PC-9 (cell line): ENCODE measurements at regions of chr1 and their contacts with region 1.

Region 1: GRCh38 chr1:44377925-44378784 is 23.1 kb upstream of the ERI3 start:
- DNase-seq: peak in 1 of 2 experiments; percentile 61
- H3K4me3 ChIP-seq: no peak overlapping the region
- H3K27ac ChIP-seq: no peak overlapping the region
- H3K4me1 ChIP-seq: no peaks in the 10 kb centered on the region
- H3K27me3 ChIP-seq: no peaks in the 10 kb centered on the region
- CTCF ChIP-seq: peak; percentile 78

Region 2: GRCh38 chr1:44213222-44214112 is 164.7 kb before region 1 on chr1 and contains the start of gene DMAP1:
- CTCF ChIA-PET with region 1: no interaction called
- POLR2A ChIA-PET with region 1: interaction called, 3 read pairs
- intact Hi-C with region 1: loop called (anchors 1 kb)
- DNase-seq: peak; percentile 65 to 80
- H3K4me3 ChIP-seq: peak within 1 kb of the TSS; percentile 86
- H3K27ac ChIP-seq: peak within 1 kb of the TSS; percentile 27; the same call in 1 of the 2 replicates
- H3K4me1 ChIP-seq: peaks cover 17% of the 10 kb centered on the region; the same call in 1 of the 2 replicates
- H3K27me3 ChIP-seq: no peaks in the 10 kb centered on the region
- CTCF ChIP-seq: no peak
- total RNA-seq, gene DMAP1: 54.2 and 68.4 TPM in 2 replicates

Region 3: GRCh38 chr1:44366371-44366975 is 11.7 kb before region 1 on chr1:
- CTCF ChIA-PET with region 1: no interaction called
- POLR2A ChIA-PET with region 1: interaction called, 11 read pairs
- intact Hi-C with region 1: no loop called
- DNase-seq: no peak
- H3K4me3 ChIP-seq: no peak overlapping the region
- H3K27ac ChIP-seq: no peak overlapping the region
- H3K4me1 ChIP-seq: no peaks in the 10 kb centered on the region
- H3K27me3 ChIP-seq: no peaks in the 10 kb centered on the region
- CTCF ChIP-seq: no peak

Region 4: DNA sequence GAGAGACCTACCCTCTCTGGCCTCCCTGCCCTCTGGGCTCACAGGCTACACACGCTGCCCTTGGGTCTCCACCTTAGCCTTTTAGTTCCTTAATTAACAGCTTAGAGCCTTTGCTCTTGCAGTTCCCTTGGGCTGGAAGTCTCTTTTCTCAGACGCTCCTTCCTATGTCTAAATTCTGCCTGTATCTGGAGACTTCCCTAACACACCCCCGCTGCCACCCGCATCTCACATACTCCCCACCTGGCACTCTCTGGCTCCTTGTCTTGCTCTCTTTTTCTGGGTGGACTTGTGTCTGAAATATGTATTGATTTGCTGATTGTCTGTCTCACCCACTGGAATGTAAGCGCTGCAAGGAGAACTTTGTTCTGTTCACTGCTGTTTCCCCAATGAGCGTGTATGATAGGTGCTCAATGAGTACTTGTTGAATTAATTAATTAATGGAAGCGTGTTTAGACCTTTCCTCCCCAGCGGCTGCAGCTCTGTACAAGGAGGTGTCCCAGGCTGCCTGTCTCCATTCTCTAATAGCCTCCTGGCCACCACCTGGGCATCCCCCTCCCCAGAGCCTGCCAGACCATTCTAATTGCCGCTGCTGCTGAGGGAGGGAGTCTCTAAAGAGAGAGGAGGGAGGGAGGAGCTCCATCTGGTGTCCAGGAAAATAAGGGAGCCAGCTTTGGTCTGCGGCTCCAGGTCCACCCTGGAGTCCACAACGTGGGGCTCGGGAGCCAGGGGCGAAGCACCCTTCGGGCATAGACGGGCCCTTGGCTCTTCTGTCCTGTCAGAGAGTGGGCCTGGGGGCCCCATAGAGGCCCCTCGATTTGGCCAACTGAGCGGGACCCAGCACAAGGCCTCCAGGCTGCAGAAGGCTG is 122.3 kb after region 1 on chr1:
- CTCF ChIA-PET with region 1: interaction called, 10 read pairs
- POLR2A ChIA-PET with region 1: no interaction called
- intact Hi-C with region 1: no loop called
- DNase-seq: no peak
- H3K4me3 ChIP-seq: no peak overlapping the region
- H3K27ac ChIP-seq: no peak overlapping the region
- H3K4me1 ChIP-seq: no peaks in the 10 kb centered on the region
- H3K27me3 ChIP-seq: no peaks in the 10 kb centered on the region
- CTCF ChIP-seq: no peak